ENCODE measurements at regions of chr6 and their contacts with region 1.

Region 1: DNA sequence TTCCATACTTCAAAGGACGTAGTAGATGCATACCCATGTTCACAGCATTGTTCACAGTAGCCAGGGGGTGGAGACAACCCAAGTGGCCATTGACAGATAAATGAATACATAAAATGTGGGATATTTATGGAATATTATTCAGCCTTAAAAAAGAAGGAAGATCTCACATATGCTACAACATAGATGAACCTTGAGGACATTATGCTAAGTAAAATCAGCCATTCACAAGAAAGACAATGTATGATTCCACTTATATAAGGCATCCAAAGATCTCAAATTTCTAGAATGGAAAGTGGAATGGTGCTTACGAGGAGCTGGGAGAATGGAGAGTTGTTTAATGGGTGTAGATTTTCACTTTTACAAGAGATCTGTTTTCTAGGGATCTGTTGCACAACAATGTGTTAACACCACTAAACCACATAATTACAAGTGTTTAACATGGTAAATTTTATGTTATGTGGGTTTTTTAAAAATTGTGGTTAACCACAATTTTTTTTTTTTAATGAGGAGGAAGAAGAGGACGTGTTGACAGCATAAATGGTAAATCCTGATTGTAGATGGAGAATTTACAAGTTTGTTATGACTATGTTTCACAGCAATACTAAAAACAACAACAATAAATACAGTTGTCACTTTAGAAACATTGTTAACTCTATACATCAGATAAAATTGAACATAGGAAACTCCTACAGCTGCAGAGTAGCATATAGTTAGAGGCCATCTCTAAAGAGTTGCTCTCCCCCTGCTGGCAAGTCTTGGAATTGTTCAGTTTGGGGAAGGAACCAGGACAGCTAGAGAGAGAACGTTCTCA is 41.6 kb downstream of the CCN2 start:
- DNase-seq: peak; percentile 66 to 80
- H3K4me3 ChIP-seq: no peak overlapping the region
- H3K4me3 Mint-ChIP-seq: no peak overlapping the region
- H3K27ac Mint-ChIP-seq: no peak overlapping the region
- H3K4me1 ChIP-seq: no peaks in the 10 kb centered on the region
- H3K4me1 Mint-ChIP-seq: peaks cover 7% of the 10 kb centered on the region
- H3K27me3 ChIP-seq: no peaks in the 10 kb centered on the region
- H3K27me3 Mint-ChIP-seq: no peaks in the 10 kb centered on the region
- CTCF ChIP-seq: peak; percentile 67 to 77

Region 2: GRCh38 chr6:131694831-131695426 is 214.7 kb before region 1 on chr6:
- CTCF ChIA-PET with region 1: interaction called, 8 read pairs
- POLR2A ChIA-PET with region 1: no interaction called
- intact Hi-C with region 1: loop called (anchors 1 kb)
- DNase-seq: peak; percentile 60 to 65
- H3K4me3 ChIP-seq: no peak overlapping the region
- H3K4me3 Mint-ChIP-seq: no peak overlapping the region
- H3K27ac Mint-ChIP-seq: no peak overlapping the region
- H3K4me1 ChIP-seq: no peaks in the 10 kb centered on the region
- H3K4me1 Mint-ChIP-seq: no peaks in the 10 kb centered on the region
- H3K27me3 ChIP-seq: no peaks in the 10 kb centered on the region
- H3K27me3 Mint-ChIP-seq: no peaks in the 10 kb centered on the region
- CTCF ChIP-seq: peak; percentile 76 to 86

Region 3: DNA sequence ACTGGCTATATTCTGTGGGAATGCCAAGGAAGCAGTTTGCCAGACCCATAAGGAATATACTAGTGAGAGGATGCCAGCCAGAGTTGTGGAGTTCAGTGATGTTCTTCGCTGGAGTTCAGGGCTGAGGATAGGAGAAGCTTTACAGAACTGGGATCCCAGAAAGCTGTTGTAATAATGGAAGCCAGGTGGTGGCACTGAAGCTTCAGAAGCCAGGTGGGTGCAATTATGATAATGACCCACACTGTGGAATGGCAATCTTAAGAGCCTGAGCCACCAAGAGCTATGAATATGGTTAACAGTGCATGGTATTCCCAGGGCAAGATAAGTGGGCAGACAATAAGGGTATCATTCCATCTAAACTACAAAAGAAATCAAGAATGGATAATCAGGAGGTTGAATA is 126.8 kb before region 1 on chr6:
- CTCF ChIA-PET with region 1: interaction called, 13 read pairs
- POLR2A ChIA-PET with region 1: no interaction called
- intact Hi-C with region 1: loop called (anchors 1 kb)
- DNase-seq: peak in 1 of 2 experiments; percentile 13
- H3K4me3 ChIP-seq: no peak overlapping the region
- H3K4me3 Mint-ChIP-seq: no peak overlapping the region
- H3K27ac Mint-ChIP-seq: no peak overlapping the region
- H3K4me1 ChIP-seq: no peaks in the 10 kb centered on the region
- H3K4me1 Mint-ChIP-seq: no peaks in the 10 kb centered on the region
- H3K27me3 ChIP-seq: no peaks in the 10 kb centered on the region
- H3K27me3 Mint-ChIP-seq: peaks cover 9% of the 10 kb centered on the region
- CTCF ChIP-seq: peak; percentile 17 to 34

Region 4: DNA sequence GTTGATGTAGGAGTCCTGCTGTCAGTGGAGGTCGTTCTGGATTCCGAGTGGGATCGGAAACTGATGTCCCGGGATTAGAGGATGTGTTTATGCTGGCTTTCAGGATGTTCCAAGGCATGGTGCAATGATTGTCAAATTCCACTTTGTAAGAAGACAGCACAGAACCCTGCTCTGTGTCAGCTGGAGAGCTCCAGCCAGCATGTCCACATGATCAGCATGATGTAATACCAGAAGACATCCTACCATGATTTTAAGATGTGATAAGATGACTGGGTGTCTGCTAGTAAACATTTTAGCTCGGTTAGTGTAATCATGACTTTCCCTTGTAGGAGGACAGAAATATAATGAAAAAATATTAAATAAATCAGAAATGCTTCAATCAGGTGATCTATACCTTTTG is 81.5 kb before region 1 on chr6:
- CTCF ChIA-PET with region 1: no interaction called
- POLR2A ChIA-PET with region 1: no interaction called
- intact Hi-C with region 1: no loop called
- DNase-seq: no peak
- H3K4me3 ChIP-seq: no peak overlapping the region
- H3K4me3 Mint-ChIP-seq: no peak overlapping the region
- H3K27ac Mint-ChIP-seq: no peak overlapping the region
- H3K4me1 ChIP-seq: no peaks in the 10 kb centered on the region
- H3K4me1 Mint-ChIP-seq: no peaks in the 10 kb centered on the region
- H3K27me3 ChIP-seq: no peaks in the 10 kb centered on the region
- H3K27me3 Mint-ChIP-seq: no peaks in the 10 kb centered on the region
- CTCF ChIP-seq: no peak

Region 5: GRCh38 chr6:131877999-131878789 is 31.4 kb before region 1 on chr6:
- CTCF ChIA-PET with region 1: no interaction called
- POLR2A ChIA-PET with region 1: no interaction called
- intact Hi-C with region 1: no loop called
- DNase-seq: no peak
- H3K4me3 ChIP-seq: no peak overlapping the region
- H3K4me3 Mint-ChIP-seq: no peak overlapping the region
- H3K27ac Mint-ChIP-seq: no peak overlapping the region
- H3K4me1 ChIP-seq: no peaks in the 10 kb centered on the region; the same call in 1 of the 2 replicates
- H3K4me1 Mint-ChIP-seq: no peaks in the 10 kb centered on the region
- H3K27me3 ChIP-seq: no peaks in the 10 kb centered on the region
- H3K27me3 Mint-ChIP-seq: no peaks in the 10 kb centered on the region
- CTCF ChIP-seq: no peak

Measured in Caco-2 (cell line).